Naive thymus-derived CD4-positive, alpha-beta T cell (primary cell): ENCODE measurements at regions of chr1 and their contacts with region 1.

Region 1: GRCh38 chr1:83086346-83086745 is 912.6 kb downstream of the TTLL7 start:
- DNase-seq: no peak
- ATAC-seq: no peak
- H3K4me3 ChIP-seq: no peak overlapping the region
- H3K4me3 Mint-ChIP-seq: no peak overlapping the region
- H3K27ac ChIP-seq: no peak overlapping the region
- H3K27ac Mint-ChIP-seq: no peak overlapping the region
- H3K4me1 ChIP-seq: no peaks in the 10 kb centered on the region
- H3K4me1 Mint-ChIP-seq: no peaks in the 10 kb centered on the region
- H3K27me3 ChIP-seq: no peaks in the 10 kb centered on the region
- H3K27me3 Mint-ChIP-seq: peaks cover 0 to 3% (median 0%) of the 10 kb centered on the region in 5 donors

Region 2: GRCh38 chr1:83098131-83098530 is 11.8 kb after region 1 on chr1:
- CTCF ChIA-PET with region 1: no interaction called
- POLR2A ChIA-PET with region 1: no interaction called
- intact Hi-C with region 1: loop called in 1 of 2 experiments (anchors 1 kb)
- DNase-seq: no peak
- ATAC-seq: no peak
- H3K4me3 ChIP-seq: no peak overlapping the region
- H3K4me3 Mint-ChIP-seq: no peak overlapping the region
- H3K27ac ChIP-seq: no peak overlapping the region
- H3K27ac Mint-ChIP-seq: no peak overlapping the region
- H3K4me1 ChIP-seq: no peaks in the 10 kb centered on the region
- H3K4me1 Mint-ChIP-seq: no peaks in the 10 kb centered on the region
- H3K27me3 ChIP-seq: no peaks in the 10 kb centered on the region
- H3K27me3 Mint-ChIP-seq: no peaks in the 10 kb centered on the region